Ascending aorta (tissue), 2 donors: ENCODE measurements at regions of chr2 and their contacts with region 1.

Region 1: GRCh38 chr2:11344342-11344955 is at the start of gene ROCK2:
- DNase-seq: peak; percentile 28 to 92
- H3K4me3 ChIP-seq: peak within 1 kb of the TSS; percentile 100
- H3K27ac ChIP-seq: peak within 1 kb of the TSS; percentile 99 to 100
- H3K4me1 ChIP-seq: peaks cover 0 to 14% of the 10 kb centered on the region in 2 donors
- H3K27me3 ChIP-seq: no peaks in the 10 kb centered on the region
- CTCF ChIP-seq: no peak
- total RNA-seq, gene ROCK2: 33.0 TPM

Region 2: GRCh38 chr2:11154923-11155380 is 189.5 kb before region 1 on chr2:
- intact Hi-C with region 1: loop called (anchors 1 kb)
- DNase-seq: peak; percentile 88 to 98
- H3K4me3 ChIP-seq: peak overlapping the region; percentile 71 to 85
- H3K27ac ChIP-seq: peak overlapping the region; percentile 96
- H3K4me1 ChIP-seq: peaks cover 4 to 18% of the 10 kb centered on the region in 2 donors
- H3K27me3 ChIP-seq: no peaks in the 10 kb centered on the region
- CTCF ChIP-seq: no peak

Region 3: GRCh38 chr2:11234309-11234708 is 110.1 kb before region 1 on chr2:
- intact Hi-C with region 1: loop called (anchors 10 kb)
- DNase-seq: no peak
- H3K4me3 ChIP-seq: no peak overlapping the region
- H3K27ac ChIP-seq: no peak overlapping the region
- H3K4me1 ChIP-seq: peaks cover 0 to 14% of the 10 kb centered on the region in 2 donors
- H3K27me3 ChIP-seq: no peaks in the 10 kb centered on the region
- CTCF ChIP-seq: peak; percentile 22 to 64 (median 34)

Region 4: DNA sequence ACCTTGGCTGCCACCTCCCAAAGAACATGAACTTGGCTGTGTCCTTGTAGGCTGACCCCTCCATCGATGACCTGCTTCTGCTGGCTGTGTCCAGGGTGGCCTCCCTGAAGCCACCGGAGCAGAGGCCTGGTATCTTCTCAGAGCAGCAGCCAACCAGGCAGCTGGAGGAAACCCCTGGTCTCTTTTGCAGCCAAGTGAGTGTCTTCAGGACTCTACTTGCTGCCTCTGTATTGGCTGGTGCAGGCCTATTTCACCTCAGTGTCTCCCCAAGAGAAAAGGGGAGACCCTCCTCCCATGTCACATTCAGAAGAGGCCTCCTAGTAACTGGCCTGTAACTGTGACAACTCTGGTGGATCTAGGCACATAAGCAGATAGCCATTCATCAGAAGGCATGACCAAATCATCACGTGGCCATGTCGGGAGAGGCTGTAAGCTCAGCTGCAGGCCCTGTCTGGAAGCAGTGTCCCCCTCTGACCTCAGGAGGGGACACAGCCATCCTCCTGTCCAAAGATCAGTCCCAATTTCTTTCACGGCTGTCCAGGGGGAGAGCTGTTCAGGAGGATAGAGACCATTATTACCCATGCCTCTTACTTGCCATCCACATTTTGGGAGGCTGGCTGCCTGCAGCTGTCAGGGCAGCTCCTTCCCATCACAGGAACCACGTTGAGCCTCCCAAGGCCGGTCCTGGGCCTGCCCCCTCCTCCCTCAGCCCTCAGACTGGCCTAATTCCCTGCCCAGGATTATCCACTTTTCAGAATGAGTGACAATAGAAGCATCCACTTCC is 20.8 kb after region 1 on chr2:
- intact Hi-C with region 1: no loop called
- DNase-seq: no peak
- H3K4me3 ChIP-seq: no peak overlapping the region
- H3K27ac ChIP-seq: no peak overlapping the region
- H3K4me1 ChIP-seq: peaks cover 3 to 9% of the 10 kb centered on the region in 2 donors
- H3K27me3 ChIP-seq: no peaks in the 10 kb centered on the region
- CTCF ChIP-seq: no peak

Region 5: GRCh38 chr2:11377928-11378545 is 33.6 kb after region 1 on chr2:
- intact Hi-C with region 1: loop called (anchors 1 kb)
- DNase-seq: peak in 1 of 2 donors; percentile 79
- H3K4me3 ChIP-seq: peak overlapping the region; percentile 13 to 50
- H3K27ac ChIP-seq: peak overlapping the region; percentile 91 to 93
- H3K4me1 ChIP-seq: peaks cover 18 to 46% of the 10 kb centered on the region in 2 donors
- H3K27me3 ChIP-seq: no peaks in the 10 kb centered on the region
- CTCF ChIP-seq: no peak